HepG2 (cell line): ENCODE measurements at regions of chr1 and their contacts with region 1.

Region 1: DNA sequence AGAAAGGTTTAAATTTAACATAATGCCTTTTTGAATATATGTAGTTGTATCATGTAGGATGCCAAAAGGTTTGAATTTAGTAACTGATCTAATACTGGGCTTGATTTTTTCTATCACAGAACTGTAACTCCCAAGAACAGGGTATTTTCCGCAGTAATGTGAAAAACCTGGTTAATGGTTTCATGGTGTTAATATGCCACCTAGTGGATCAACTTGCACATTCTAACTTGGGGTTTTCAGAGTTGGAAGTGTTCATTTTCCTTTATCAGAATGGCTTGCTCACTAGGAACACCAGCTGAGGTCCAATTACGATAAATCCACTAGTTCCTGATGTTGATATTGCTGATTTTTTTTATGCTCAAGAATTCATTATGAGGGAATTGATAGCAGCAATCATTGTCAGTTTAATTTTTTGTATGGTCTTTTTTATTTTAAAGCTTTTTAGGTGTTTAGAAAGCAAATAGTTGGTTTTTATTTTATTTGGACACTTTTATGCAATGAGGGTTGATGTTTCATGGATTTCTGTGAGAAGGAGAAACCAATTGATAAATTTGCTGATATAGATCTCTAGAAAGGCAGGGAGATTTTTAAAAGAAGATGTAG is 157.2 kb downstream of the PLA2G4A start:
- DNase-seq: peak; percentile 45
- ATAC-seq: peak; percentile 72
- H3K4me3 ChIP-seq: no peak overlapping the region
- H3K27ac ChIP-seq: no peak overlapping the region
- H3K4me1 ChIP-seq: no peaks in the 10 kb centered on the region
- H3K27me3 ChIP-seq: no peaks in the 10 kb centered on the region
- CTCF ChIP-seq: peak; percentile 75
- EP300 ChIP-seq: no peak
- POLR2A ChIP-seq: no peak
- RAD21 ChIP-seq: 0 out of 2 replicates have a peak, but pooled peaks have one; percentile 34

Region 2: GRCh38 chr1:186404454-186405051 is 581.4 kb before region 1 on chr1:
- CTCF ChIA-PET with region 1: no interaction called
- POLR2A ChIA-PET with region 1: no interaction called
- in situ Hi-C with region 1: no loop called
- intact Hi-C with region 1: loop called (anchors 1 kb)
- DNase-seq: peak; percentile 27
- ATAC-seq: no peak; the same call in 2 of the 3 replicates
- H3K4me3 ChIP-seq: no peak overlapping the region
- H3K27ac ChIP-seq: no peak overlapping the region
- H3K4me1 ChIP-seq: no peaks in the 10 kb centered on the region
- H3K27me3 ChIP-seq: no peaks in the 10 kb centered on the region
- CTCF ChIP-seq: peak; percentile 59
- EP300 ChIP-seq: no peak
- POLR2A ChIP-seq: no peak
- RAD21 ChIP-seq: no peak

Region 3: DNA sequence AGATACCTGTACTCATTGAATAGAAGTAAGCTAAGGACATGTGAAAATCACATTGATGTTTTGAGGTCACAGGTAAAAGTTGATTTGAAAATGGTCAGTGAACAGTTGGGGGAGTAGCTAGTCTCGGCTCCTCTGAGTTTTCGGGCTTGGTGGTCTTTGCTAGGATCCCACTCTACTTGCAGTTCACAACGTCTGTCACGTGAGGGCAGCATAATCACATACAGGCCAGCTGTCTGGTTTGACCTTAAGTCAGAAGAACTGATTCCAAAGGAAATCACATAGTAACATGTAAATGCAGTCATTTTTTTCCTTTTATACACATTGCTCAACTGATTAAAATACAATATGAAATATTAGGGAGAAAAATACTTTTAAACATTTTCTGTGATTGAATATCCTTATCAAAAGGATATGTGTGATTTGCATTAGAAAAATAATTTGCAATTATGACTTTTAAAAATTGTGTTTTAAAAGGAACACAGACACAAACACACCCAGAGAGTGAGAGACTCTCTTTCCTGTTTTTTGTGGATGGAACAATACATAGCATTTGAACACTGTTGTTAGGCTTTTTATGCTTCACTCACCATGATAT is 503.2 kb before region 1 on chr1:
- CTCF ChIA-PET with region 1: interaction called, 28 read pairs
- POLR2A ChIA-PET with region 1: no interaction called
- in situ Hi-C with region 1: loop called (anchors 5 kb)
- intact Hi-C with region 1: loop called (anchors 1 kb)
- DNase-seq: peak; percentile 47
- ATAC-seq: peak; percentile 72
- H3K4me3 ChIP-seq: no peak overlapping the region
- H3K27ac ChIP-seq: no peak overlapping the region
- H3K4me1 ChIP-seq: no peaks in the 10 kb centered on the region
- H3K27me3 ChIP-seq: no peaks in the 10 kb centered on the region
- CTCF ChIP-seq: peak; percentile 83
- EP300 ChIP-seq: no peak
- POLR2A ChIP-seq: no peak
- RAD21 ChIP-seq: peak; percentile 67; the same call in 1 of the 2 replicates

Region 4: GRCh38 chr1:186605762-186606350 is 380.1 kb before region 1 on chr1:
- CTCF ChIA-PET with region 1: interaction called, 7 read pairs
- POLR2A ChIA-PET with region 1: no interaction called
- in situ Hi-C with region 1: loop called (anchors 5 kb)
- intact Hi-C with region 1: loop called (anchors 1 kb)
- DNase-seq: peak; percentile 23
- ATAC-seq: peak; percentile 89
- H3K4me3 ChIP-seq: no peak overlapping the region
- H3K27ac ChIP-seq: no peak overlapping the region
- H3K4me1 ChIP-seq: no peaks in the 10 kb centered on the region
- H3K27me3 ChIP-seq: no peaks in the 10 kb centered on the region; a peak in 1 of 5 replicates
- CTCF ChIP-seq: peak; percentile 78
- EP300 ChIP-seq: no peak
- POLR2A ChIP-seq: no peak
- RAD21 ChIP-seq: peak; percentile 41; the same call in 1 of the 2 replicates

Region 5: DNA sequence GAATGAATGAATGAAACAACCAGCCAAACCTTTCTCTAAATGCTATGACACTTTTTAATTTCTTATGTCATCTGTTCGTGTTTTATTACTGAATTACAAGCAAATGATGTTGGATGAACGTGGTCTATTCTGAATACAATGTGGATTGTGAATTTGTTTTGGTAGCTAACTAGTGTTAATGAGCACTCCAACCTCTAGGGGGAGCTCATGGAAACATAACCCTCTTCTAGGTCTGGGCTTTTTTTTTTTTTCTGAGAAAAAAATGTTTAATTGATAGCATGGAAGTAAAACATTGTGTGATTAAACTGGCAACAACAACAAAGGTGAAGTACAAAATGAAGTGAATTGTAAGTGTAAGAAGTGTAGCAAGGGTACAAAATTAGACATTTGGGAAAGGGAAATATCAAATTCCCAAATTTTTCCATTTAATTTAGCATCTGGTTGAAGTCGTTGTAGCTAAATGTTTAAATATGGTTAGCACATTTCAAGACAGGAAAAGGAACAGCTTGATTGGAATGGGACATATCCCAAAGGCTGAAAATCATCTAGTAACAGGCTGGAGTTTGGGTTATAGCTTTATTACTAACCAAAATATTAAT is 263.2 kb before region 1 on chr1:
- CTCF ChIA-PET with region 1: interaction called, 5 read pairs
- POLR2A ChIA-PET with region 1: no interaction called
- in situ Hi-C with region 1: no loop called
- intact Hi-C with region 1: loop called (anchors 2 kb)
- DNase-seq: peak; percentile 37
- ATAC-seq: peak; percentile 62
- H3K4me3 ChIP-seq: no peak overlapping the region
- H3K27ac ChIP-seq: no peak overlapping the region
- H3K4me1 ChIP-seq: no peaks in the 10 kb centered on the region
- H3K27me3 ChIP-seq: no peaks in the 10 kb centered on the region
- CTCF ChIP-seq: peak; percentile 40
- EP300 ChIP-seq: no peak
- POLR2A ChIP-seq: no peak
- RAD21 ChIP-seq: no peak